ENCODE measurements at regions of chr9 and their contacts with region 1.

Region 1: GRCh38 chr9:114472765-114473446 is 32.4 kb downstream of the WHRN start:
- DNase-seq: no peak
- H3K4me3 ChIP-seq: no peak overlapping the region
- H3K27ac ChIP-seq: no peak overlapping the region
- H3K4me1 ChIP-seq: no peaks in the 10 kb centered on the region
- H3K27me3 ChIP-seq: no peaks in the 10 kb centered on the region
- CTCF ChIP-seq: no peak

Region 2: DNA sequence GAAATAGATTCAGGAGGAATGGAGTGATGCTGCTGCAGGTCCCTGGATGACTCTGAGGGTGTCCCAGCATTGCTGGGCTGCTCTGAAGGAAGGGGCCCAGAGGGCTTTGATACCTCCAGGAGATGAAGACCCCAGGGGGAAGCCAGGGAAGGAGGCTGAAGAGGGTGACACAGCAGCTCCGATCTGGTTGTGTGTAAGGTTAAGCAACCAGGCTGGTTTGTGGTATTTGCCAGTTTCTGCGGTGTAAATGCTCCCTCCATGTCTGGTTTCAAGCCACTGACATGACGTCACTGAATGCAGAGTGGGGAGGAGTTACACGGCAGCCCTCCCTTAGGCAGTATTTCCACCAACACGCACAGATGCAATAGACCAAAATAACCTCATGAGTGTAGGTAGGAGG is 190.0 kb before region 1 on chr9:
- intact Hi-C with region 1: no loop called
- DNase-seq: no peak
- H3K4me3 ChIP-seq: no peak overlapping the region
- H3K27ac ChIP-seq: no peak overlapping the region
- H3K4me1 ChIP-seq: no peaks in the 10 kb centered on the region
- H3K27me3 ChIP-seq: no peaks in the 10 kb centered on the region
- CTCF ChIP-seq: no peak

Region 3: GRCh38 chr9:114428466-114428865 is 44.4 kb before region 1 on chr9:
- intact Hi-C with region 1: loop called (anchors 10 kb)
- DNase-seq: no peak
- H3K4me3 ChIP-seq: no peak overlapping the region
- H3K27ac ChIP-seq: no peak overlapping the region
- H3K4me1 ChIP-seq: no peaks in the 10 kb centered on the region
- H3K27me3 ChIP-seq: no peaks in the 10 kb centered on the region
- CTCF ChIP-seq: no peak

Region 4: DNA sequence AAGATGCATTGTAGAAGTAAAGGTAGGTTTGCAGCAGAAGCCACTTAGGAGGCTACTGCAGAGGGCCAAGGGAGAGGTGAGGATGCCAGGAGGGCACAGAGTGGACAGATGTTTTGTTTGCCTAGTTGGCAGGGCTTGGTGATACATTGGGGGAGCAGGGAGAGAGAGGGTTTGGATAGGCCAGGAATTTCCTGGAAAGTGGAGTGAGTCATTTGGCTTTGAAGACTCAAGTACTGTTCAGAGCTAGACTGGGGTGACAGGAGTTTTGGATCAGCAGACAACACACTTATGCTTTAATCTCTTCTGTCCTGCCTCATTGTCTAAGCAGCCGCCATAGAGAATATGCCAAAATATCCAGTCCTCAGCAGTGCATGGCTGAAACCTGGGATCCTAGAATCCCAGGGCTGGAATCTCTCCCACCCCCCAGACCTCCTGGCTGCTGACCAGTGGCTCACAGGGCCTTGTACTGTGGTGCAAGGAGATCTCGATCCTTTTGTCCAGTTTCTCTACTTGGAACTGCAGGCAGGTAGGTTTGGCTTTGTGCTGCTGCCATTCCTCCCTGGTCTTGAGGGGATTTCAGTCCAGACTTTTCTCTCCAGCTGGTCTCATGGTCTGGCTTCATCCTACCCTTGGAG is 149.2 kb after region 1 on chr9:
- intact Hi-C with region 1: no loop called
- DNase-seq: no peak
- H3K4me3 ChIP-seq: no peak overlapping the region
- H3K27ac ChIP-seq: no peak overlapping the region
- H3K4me1 ChIP-seq: no peaks in the 10 kb centered on the region
- H3K27me3 ChIP-seq: no peaks in the 10 kb centered on the region
- CTCF ChIP-seq: no peak